ENCODE measurements at regions of chr10 and their contacts with region 1.

Region 1: DNA sequence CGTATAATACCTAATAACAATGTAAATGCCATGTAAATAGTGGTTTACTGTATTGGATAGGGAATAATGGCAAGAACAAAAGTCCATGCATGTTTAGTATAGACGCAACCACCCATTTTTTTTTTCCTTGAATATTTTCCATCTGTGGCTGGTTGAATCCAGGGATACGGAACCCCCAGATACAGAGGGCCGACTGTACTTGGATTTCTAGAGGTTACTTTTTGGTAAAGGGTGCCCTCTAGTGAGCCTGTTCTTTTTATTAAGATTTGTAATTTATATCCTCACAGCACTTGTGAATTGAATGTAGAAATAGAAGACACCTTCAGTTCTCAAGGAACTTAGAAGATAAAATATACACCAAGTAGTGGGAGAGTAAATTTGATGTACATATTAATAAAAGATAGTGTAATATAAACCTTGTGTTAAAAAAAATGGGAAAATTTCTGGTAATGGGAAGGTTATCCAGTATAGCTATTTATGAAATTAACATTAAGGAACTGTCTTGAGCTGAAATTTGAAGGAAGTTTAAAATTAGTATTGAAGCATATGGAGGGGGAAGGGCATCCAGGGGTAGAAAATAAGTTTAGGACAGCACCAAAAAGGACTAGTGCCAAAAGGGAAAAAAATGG is 32.0 kb downstream of the EXOC6 start:
- DNase-seq: peak; percentile 17
- H3K4me3 ChIP-seq: no peak overlapping the region
- H3K27ac ChIP-seq: no peak overlapping the region
- H3K4me1 ChIP-seq: no peaks in the 10 kb centered on the region
- H3K27me3 ChIP-seq: no peaks in the 10 kb centered on the region
- CTCF ChIP-seq: peak; percentile 31 to 48

Region 2: DNA sequence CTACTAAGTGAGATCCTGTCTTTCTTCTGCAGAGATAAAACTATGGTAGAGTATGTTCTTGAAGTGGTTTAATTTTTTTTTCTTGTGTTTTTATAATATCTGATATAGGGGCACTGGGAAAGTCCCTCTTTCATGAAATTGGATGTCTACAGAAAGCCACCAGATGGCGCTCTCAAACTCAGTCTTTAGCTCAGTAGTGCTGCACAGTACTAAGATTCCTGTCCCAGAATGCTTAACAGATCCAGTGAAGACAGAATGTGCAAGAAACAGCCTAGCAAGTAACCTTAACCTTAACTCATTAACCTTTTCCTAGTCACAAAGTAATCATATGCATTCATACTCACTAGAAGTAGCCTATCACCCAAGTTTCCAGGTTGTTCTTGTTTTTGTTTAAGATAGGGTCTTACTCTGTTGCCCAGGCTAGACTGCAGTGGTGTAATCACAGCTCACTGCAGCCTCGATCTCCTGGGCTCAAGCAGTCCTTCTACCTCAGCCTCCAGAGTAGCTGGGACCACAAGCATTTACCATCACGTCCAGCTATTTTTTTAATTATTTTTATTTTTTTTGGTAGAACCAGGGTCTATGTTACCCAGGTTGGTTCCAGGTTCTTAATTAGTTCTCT is 363.2 kb before region 1 on chr10:
- CTCF ChIA-PET with region 1: no interaction called
- dilution Hi-C with region 1: no loop called
- in situ Hi-C with region 1: no loop called
- intact Hi-C with region 1: loop called (anchors 1 kb)
- DNase-seq: peak; percentile 45
- H3K4me3 ChIP-seq: no peak overlapping the region
- H3K27ac ChIP-seq: no peak overlapping the region
- H3K4me1 ChIP-seq: no peaks in the 10 kb centered on the region
- H3K27me3 ChIP-seq: no peaks in the 10 kb centered on the region
- CTCF ChIP-seq: peak; percentile 70 to 73

Region 3: GRCh38 chr10:92640110-92640509 is 240.2 kb before region 1 on chr10:
- CTCF ChIA-PET with region 1: no interaction called
- dilution Hi-C with region 1: no loop called
- in situ Hi-C with region 1: no loop called
- intact Hi-C with region 1: loop called (anchors 5 kb)
- DNase-seq: peak; percentile 8
- H3K4me3 ChIP-seq: no peak overlapping the region
- H3K27ac ChIP-seq: no peak overlapping the region
- H3K4me1 ChIP-seq: no peaks in the 10 kb centered on the region
- H3K27me3 ChIP-seq: no peaks in the 10 kb centered on the region
- CTCF ChIP-seq: peak in 1 of 2 donors; percentile 20

Region 4: DNA sequence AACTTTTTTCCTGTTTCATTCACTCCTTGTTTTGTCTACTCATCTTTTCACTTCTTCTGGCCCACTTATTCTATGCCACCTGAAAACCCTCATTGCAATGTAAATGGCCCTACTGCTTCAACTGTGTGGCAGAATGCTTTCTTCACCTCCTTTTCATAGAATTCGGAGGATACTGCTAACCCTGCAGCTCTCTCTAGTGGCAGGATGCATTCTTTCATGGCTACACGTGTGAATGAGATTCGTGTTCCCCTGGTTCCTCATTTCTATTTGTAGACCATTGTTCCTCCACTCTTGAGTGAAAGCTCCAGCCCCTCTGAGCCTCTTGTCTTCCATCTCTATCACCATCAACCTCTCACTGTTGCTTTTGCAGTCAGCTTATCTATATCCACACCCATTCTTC is 159.4 kb after region 1 on chr10:
- CTCF ChIA-PET with region 1: no interaction called
- dilution Hi-C with region 1: no loop called
- in situ Hi-C with region 1: loop called in 1 of 2 experiments (anchors 25 kb)
- intact Hi-C with region 1: loop called (anchors 1 kb)
- DNase-seq: peak; percentile 29
- H3K4me3 ChIP-seq: no peak overlapping the region
- H3K27ac ChIP-seq: no peak overlapping the region
- H3K4me1 ChIP-seq: peaks cover 4% of the 10 kb centered on the region
- H3K27me3 ChIP-seq: no peaks in the 10 kb centered on the region
- CTCF ChIP-seq: peak; percentile 56 to 81

Region 5: GRCh38 chr10:93288654-93289634 is 408.6 kb after region 1 on chr10:
- CTCF ChIA-PET with region 1: no interaction called
- dilution Hi-C with region 1: no loop called
- in situ Hi-C with region 1: no loop called
- intact Hi-C with region 1: loop called (anchors 1 kb)
- DNase-seq: peak; percentile 70
- H3K4me3 ChIP-seq: no peak overlapping the region
- H3K27ac ChIP-seq: no peak overlapping the region
- H3K4me1 ChIP-seq: peaks cover 13% of the 10 kb centered on the region
- H3K27me3 ChIP-seq: no peaks in the 10 kb centered on the region
- CTCF ChIP-seq: peak; percentile 69 to 80

Region 6: DNA sequence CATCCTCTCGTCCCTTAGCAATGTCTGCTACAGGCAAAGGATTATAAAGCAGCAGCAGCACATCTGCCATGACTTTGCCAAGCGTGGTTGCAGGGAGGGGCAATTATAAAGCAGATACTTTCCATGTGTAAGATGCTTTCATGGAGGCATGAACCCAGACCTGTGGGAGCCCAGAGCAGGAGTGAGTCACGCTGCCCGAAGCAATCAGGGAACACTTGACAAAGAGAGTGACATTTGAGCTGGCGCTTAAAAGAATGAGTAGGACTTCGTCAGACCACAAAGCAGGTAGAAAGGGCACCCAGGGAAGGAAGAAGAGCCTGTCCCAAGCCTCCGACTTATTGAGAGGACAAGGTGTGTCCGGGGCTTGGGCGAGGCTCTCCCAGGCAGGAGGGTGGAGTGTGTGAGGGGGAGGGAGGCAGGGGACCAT is 454.6 kb after region 1 on chr10:
- CTCF ChIA-PET with region 1: no interaction called
- dilution Hi-C with region 1: no loop called
- in situ Hi-C with region 1: loop called in 1 of 2 experiments (anchors 25 kb)
- intact Hi-C with region 1: no loop called
- DNase-seq: peak; percentile 94
- H3K4me3 ChIP-seq: no peak overlapping the region
- H3K27ac ChIP-seq: peak overlapping the region; percentile 56
- H3K4me1 ChIP-seq: peaks cover 26% of the 10 kb centered on the region
- H3K27me3 ChIP-seq: no peaks in the 10 kb centered on the region
- CTCF ChIP-seq: no peak

Region 7: GRCh38 chr10:93515071-93516005 is 635.0 kb after region 1 on chr10:
- CTCF ChIA-PET with region 1: no interaction called
- dilution Hi-C with region 1: no loop called
- in situ Hi-C with region 1: no loop called
- intact Hi-C with region 1: loop called (anchors 5 kb)
- DNase-seq: no peak
- H3K4me3 ChIP-seq: no peak overlapping the region
- H3K27ac ChIP-seq: no peak overlapping the region
- H3K4me1 ChIP-seq: no peaks in the 10 kb centered on the region
- H3K27me3 ChIP-seq: no peaks in the 10 kb centered on the region
- CTCF ChIP-seq: no peak

Region 8: DNA sequence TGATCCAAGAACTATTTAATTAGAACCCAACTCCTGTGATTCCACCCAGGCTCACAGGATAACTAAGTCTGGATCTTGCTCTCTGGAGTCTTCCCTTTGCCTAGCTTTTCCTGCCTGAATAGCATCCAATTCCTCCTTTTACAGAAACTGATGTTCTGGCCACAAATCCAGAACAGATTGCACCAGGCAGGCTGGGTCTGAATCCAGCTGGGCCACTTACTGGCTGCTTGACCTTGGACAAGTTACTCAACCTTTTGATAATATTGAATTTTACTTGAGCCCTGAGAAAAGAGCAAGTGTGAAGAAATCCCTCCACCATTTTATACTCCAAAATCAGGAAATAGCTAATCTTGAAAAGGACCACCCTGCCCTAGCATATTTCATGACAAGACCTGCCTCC is 957.9 kb after region 1 on chr10:
- CTCF ChIA-PET with region 1: no interaction called
- dilution Hi-C with region 1: no loop called
- in situ Hi-C with region 1: no loop called
- intact Hi-C with region 1: no loop called
- DNase-seq: no peak
- H3K4me3 ChIP-seq: no peak overlapping the region
- H3K27ac ChIP-seq: no peak overlapping the region
- H3K4me1 ChIP-seq: no peaks in the 10 kb centered on the region
- H3K27me3 ChIP-seq: peaks cover 3% of the 10 kb centered on the region
- CTCF ChIP-seq: no peak

Measured in mammary epithelial cell (primary cell).